H1 (cell line): ENCODE measurements at regions of chr1 and their contacts with region 1.

Region 1: DNA sequence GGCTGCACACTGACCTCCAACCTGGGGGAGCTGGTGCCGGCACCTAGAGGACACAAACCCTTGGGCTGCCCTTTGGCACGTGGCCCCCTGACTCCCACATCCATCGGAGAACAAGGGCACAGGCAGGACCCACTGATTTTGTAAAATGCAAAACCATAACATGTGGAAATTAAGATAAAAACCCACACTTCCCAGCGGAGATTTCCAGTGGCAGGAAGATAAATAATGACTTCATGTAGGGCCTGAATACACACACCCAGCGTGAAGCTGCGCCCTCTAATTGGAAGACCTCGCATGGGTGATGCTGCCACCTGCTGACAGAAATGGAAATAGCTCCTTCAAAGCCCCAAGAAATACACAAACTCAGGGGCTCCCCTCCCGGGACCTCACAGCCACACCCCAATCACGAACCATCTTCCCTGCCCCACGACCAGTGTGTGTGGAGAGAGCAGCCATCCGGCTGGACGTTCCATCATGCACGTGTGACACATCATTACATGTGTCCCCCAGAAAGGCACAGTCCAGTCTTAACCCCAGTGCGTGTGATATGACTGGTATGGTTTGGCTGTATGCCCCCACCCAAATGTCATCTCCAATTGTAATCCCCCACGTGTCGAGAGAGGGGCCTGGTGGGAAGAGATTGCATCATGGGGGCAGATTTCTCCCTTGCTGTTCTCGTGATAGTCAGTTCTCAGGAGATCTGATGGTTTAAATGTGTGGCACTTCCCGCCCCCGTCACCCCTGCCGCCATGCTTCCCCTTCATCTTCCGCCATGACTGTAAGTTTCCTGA is 5.7 kb upstream of the TPRG1L start:
- DNase-seq: peak in 1 of 2 experiments; percentile 89
- H3K4me3 ChIP-seq: no peak overlapping the region
- H3K27ac ChIP-seq: no peak overlapping the region
- H3K4me1 ChIP-seq: peaks cover 0 to 11% (median 4%) of the 10 kb centered on the region in 4 experiments; a peak in 5 of 7 replicates
- H3K27me3 ChIP-seq: no peaks in the 10 kb centered on the region; a peak in 1 of 7 replicates
- CTCF ChIP-seq: peak in 2 of 3 experiments; percentile 79 to 93; a peak in 3 of 4 replicates
- EP300 ChIP-seq: no peak
- POLR2A ChIP-seq: no peak
- RAD21 ChIP-seq: peak; percentile 63 to 75

Region 2: GRCh38 chr1:3483801-3484444 is 135.2 kb before region 1 on chr1:
- CTCF ChIA-PET with region 1: interaction called, 12 read pairs
- POLR2A ChIA-PET with region 1: no interaction called
- DNase-seq: peak; percentile 44 to 97
- H3K4me3 ChIP-seq: no peak overlapping the region
- H3K27ac ChIP-seq: no peak overlapping the region
- H3K4me1 ChIP-seq: no peaks in the 10 kb centered on the region
- H3K27me3 ChIP-seq: no peaks in the 10 kb centered on the region
- CTCF ChIP-seq: peak in 2 of 3 experiments; percentile 81 to 95; a peak in 3 of 4 replicates
- EP300 ChIP-seq: no peak
- POLR2A ChIP-seq: no peak; a peak in 1 of 3 replicates
- RAD21 ChIP-seq: peak; percentile 70 to 81

Region 3: DNA sequence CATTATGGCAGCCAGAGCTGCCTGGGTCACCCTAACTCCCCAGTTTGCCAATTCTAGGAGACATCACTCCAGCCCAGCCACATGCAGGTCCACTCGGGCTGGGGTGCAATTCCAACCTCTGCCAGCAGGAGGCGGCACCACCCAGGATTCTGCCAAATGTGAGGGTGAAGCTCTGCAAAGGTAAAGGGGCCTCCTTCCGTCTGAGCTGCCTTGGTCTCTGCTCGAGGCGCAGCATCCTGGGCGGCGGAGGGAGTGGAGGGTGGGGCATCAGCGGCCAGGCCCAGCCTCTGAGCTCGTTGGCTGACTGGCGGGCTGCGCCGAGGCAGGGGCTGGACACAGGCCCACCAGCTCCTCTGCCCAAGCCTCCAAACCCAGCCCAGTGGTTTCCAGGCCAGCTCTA is 100.8 kb before region 1 on chr1:
- CTCF ChIA-PET with region 1: interaction called, 24 read pairs
- POLR2A ChIA-PET with region 1: no interaction called
- DNase-seq: peak in 1 of 2 experiments; percentile 87
- H3K4me3 ChIP-seq: no peak overlapping the region
- H3K27ac ChIP-seq: no peak overlapping the region
- H3K4me1 ChIP-seq: no peaks in the 10 kb centered on the region; a peak in 2 of 7 replicates
- H3K27me3 ChIP-seq: no peaks in the 10 kb centered on the region
- CTCF ChIP-seq: peak in 2 of 3 experiments; percentile 48 to 73; a peak in 2 of 4 replicates
- EP300 ChIP-seq: no peak
- POLR2A ChIP-seq: no peak
- RAD21 ChIP-seq: peak; percentile 39 to 50; a peak in 3 of 4 replicates

Region 4: DNA sequence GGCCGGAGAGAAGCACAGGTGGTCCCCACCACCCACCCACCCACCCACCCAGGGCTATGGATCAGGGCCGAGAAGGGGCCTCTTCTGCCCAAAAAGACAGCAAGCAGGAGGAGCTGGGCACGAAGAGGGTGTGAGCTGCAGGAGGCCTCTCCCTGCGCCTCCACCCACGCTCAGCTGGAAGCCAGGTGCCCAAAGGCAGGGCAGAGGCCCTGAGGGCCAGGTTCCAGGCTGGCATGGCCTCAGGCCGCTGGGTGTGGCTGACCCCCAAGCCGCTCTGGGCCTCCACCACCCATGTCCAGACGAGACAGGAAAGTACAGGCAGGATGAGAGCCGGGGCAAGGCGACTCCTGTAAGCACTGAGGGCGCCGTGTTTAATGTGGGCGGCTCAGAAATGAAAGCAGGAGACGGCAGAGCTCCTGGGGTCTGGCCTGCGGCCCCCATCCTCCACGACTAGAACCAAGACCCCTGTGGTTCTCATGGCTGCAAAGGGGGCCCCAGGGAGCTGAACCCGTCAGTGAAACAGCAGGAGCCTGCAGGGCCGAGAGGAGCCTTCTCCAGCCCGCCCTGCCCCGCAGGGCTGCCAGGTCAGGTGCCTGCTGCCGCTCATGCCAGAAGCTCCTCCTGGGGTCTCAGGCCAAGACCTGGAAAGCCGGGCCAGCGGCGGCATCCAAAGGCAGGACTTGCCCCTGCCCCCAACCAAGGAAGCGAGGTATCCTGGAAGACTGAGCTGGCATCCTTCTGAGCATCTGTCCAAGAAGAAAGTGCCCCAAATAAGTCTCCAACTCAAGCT is 63.8 kb before region 1 on chr1:
- CTCF ChIA-PET with region 1: interaction called, 13 read pairs
- POLR2A ChIA-PET with region 1: no interaction called
- DNase-seq: no peak
- H3K4me3 ChIP-seq: no peak overlapping the region
- H3K27ac ChIP-seq: no peak overlapping the region
- H3K4me1 ChIP-seq: no peaks in the 10 kb centered on the region
- H3K27me3 ChIP-seq: no peaks in the 10 kb centered on the region
- CTCF ChIP-seq: no peak
- EP300 ChIP-seq: no peak
- POLR2A ChIP-seq: no peak
- RAD21 ChIP-seq: no peak

Region 5: DNA sequence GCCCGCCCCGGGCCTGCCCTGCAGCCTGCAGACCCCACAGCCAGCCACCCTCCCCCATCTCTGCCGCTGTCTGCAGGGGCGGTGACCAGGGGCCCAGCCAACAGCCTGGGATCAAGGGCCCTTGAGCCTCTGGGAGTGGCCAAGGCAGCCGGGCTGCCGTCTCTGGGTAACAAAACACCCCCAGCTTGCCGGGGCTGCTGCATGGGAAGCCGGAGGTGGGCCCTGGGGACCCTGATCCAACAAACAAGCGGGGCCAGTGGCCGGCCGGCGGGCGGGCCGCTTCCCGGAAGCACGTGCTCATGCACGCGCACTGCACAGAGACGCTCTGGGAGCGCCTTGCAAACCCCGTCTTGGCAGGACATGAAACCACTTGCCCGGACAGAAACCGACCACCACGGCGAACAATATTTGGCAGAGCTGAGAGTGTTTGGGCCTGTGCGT is 21.0 kb before region 1 on chr1:
- CTCF ChIA-PET with region 1: interaction called, 132 read pairs
- POLR2A ChIA-PET with region 1: interaction called, 3 read pairs
- DNase-seq: no peak
- H3K4me3 ChIP-seq: no peak overlapping the region
- H3K27ac ChIP-seq: no peak overlapping the region
- H3K4me1 ChIP-seq: peaks cover 0 to 28% (median 20%) of the 10 kb centered on the region in 4 experiments; a peak in 6 of 7 replicates
- H3K27me3 ChIP-seq: no peaks in the 10 kb centered on the region
- CTCF ChIP-seq: no peak
- EP300 ChIP-seq: no peak
- POLR2A ChIP-seq: no peak
- RAD21 ChIP-seq: no peak

Region 6: GRCh38 chr1:3631330-3632262 is 12.5 kb after region 1 on chr1:
- CTCF ChIA-PET with region 1: interaction called, 22 read pairs
- POLR2A ChIA-PET with region 1: interaction called, 5 read pairs
- DNase-seq: no peak
- H3K4me3 ChIP-seq: no peak overlapping the region
- H3K27ac ChIP-seq: no peak overlapping the region; the same call in 1 of the 2 replicates
- H3K4me1 ChIP-seq: peaks cover 0 to 10% (median 2%) of the 10 kb centered on the region in 4 experiments; a peak in 3 of 7 replicates
- H3K27me3 ChIP-seq: no peaks in the 10 kb centered on the region
- CTCF ChIP-seq: no peak
- EP300 ChIP-seq: no peak
- POLR2A ChIP-seq: no peak
- RAD21 ChIP-seq: no peak